ENCODE measurements at regions of chr2 and their contacts with region 1.

Region 1: GRCh38 chr2:51103205-51103604 is 71.3 kb upstream of the NRXN1 start:
- DNase-seq: peak in 2 of 3 donors; percentile 32 to 34
- ATAC-seq: peak; percentile 36 to 70
- H3K4me3 ChIP-seq: no peak overlapping the region
- H3K27ac ChIP-seq: no peak overlapping the region
- H3K4me1 ChIP-seq: no peaks in the 10 kb centered on the region
- H3K27me3 ChIP-seq: no peaks in the 10 kb centered on the region

Region 2: GRCh38 chr2:50178050-50178449 is 925.2 kb before region 1 on chr2:
- intact Hi-C with region 1: loop called in 1 of 4 experiments (anchors 5 kb)
- DNase-seq: no peak
- ATAC-seq: no peak
- H3K4me3 ChIP-seq: no peak overlapping the region
- H3K27ac ChIP-seq: no peak overlapping the region
- H3K4me1 ChIP-seq: no peaks in the 10 kb centered on the region
- H3K27me3 ChIP-seq: no peaks in the 10 kb centered on the region